AG04450 (cell line): ENCODE measurements at regions of chr5 and their contacts with region 1.

Region 1: DNA sequence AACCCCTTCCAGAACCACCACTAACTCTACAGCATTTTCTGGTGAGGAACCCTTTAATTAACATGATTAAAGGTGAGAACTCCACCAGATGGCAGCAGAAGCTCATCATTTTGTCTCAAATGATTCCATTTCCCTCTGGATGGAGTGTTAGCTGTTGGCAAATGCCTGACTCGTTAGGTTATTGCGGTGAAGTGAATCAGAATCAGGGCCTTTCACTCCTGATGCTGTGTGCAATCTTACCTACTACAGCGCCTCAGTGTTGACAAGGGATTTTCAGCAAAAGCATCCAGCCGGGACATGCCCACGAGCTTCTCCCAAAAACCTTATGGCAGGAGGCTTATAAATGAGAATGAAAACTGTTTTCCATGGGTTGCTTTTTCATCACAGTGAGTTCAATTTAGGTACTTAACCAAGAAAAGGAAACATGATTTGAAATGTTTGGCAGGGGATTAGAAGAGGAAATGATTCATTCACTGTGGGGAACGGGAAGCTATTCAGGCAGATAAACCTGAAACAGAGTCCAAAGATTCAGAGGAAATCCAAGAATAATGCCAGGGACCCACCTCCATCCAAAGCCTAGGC is 48.0 kb upstream of the CAST start:
- DNase-seq: peak; percentile 86
- H3K4me3 ChIP-seq: peak overlapping the region; percentile 45
- H3K27ac ChIP-seq: peak overlapping the region; percentile 81
- H3K27me3 ChIP-seq: no peaks in the 10 kb centered on the region
- CTCF ChIP-seq: peak; percentile 52

Region 2: DNA sequence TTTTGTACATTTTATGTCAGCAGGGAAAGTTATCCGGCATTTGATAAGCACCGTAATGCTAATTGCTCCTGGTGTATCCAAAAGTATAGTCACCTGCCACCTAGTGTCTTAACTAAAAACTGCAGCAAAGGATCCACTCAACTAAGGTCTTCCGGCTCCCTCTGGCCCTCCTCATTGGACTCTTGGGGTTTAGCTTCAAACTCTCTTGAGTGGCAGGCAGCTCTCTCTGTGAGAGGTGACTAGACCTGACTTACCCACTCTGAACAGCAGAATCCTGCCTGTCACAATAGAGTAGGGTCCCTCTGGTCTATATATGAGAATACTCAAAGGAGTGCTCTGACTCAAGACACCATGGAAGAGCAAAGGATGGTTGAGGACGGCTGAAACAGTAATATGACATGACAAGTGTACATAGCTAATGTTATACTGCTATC is 12.4 kb before region 1 on chr5:
- CTCF ChIA-PET with region 1: interaction called, 42 read pairs
- POLR2A ChIA-PET with region 1: no interaction called
- DNase-seq: peak; percentile 44
- H3K4me3 ChIP-seq: no peak overlapping the region
- H3K27ac ChIP-seq: no peak overlapping the region
- H3K27me3 ChIP-seq: no peaks in the 10 kb centered on the region
- CTCF ChIP-seq: peak; percentile 85

Region 3: DNA sequence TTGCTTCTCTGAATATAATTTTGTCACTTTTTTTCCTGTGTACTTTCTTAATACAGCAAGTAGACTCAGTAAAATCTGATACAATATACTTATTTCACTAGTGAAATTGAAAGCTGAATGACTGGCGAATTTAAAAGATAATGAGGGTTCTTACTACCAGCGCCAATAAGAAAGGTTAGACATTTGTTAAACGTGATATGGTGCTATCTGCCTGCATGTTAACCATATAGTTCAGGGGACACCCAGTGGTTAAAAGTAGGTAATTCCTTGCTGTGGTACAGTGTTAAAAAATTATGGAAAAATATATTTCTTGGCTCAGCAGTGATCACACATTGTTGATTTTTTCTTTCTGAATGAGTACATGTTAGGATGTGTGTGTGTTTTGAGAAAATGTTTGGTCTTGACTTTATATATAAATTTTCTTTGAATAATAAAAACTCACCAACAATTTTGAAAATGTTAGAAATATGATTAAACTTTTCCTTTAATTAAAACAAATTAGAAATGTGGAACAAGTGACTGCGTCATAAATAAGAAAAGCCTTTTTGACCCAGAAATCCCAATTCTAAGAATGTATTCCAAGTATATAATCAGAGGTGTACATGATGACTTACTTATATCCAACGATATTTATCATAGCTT is 73.7 kb after region 1 on chr5:
- CTCF ChIA-PET with region 1: interaction called, 69 read pairs
- POLR2A ChIA-PET with region 1: no interaction called
- DNase-seq: no peak
- H3K4me3 ChIP-seq: no peak overlapping the region
- H3K27ac ChIP-seq: no peak overlapping the region
- H3K27me3 ChIP-seq: no peaks in the 10 kb centered on the region
- CTCF ChIP-seq: peak; percentile 77

Region 4: DNA sequence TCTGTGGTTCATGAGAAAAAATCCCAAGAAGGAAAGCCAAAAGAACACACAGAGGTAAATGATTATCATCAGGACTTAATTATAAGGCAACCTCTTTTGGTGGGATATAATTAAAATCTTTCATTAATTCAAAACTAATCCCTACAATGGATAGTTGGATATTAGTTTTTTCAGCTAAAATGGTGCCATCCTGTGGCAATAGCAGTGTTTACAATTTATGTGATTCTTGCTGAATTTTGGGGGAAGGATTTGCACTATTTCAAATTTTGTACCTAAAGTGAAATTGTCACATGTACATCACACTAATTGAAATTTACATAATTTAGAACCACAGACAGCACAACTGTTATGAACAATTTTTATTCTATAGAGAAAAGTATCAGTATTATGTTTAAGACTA is 115.0 kb after region 1 on chr5:
- CTCF ChIA-PET with region 1: interaction called, 25 read pairs
- POLR2A ChIA-PET with region 1: no interaction called
- DNase-seq: no peak
- H3K4me3 ChIP-seq: no peak overlapping the region
- H3K27ac ChIP-seq: no peak overlapping the region
- H3K27me3 ChIP-seq: no peaks in the 10 kb centered on the region
- CTCF ChIP-seq: peak; percentile 32

Region 5: GRCh38 chr5:96752341-96753016 is 138.3 kb after region 1 on chr5:
- CTCF ChIA-PET with region 1: interaction called, 21 read pairs
- POLR2A ChIA-PET with region 1: no interaction called
- DNase-seq: peak; percentile 60
- H3K4me3 ChIP-seq: no peak overlapping the region
- H3K27ac ChIP-seq: no peak overlapping the region
- H3K27me3 ChIP-seq: no peaks in the 10 kb centered on the region
- CTCF ChIP-seq: peak; percentile 67

Region 6: GRCh38 chr5:97162045-97162444 is 547.8 kb after region 1 on chr5:
- CTCF ChIA-PET with region 1: interaction called, 13 read pairs
- POLR2A ChIA-PET with region 1: no interaction called
- DNase-seq: peak; percentile 69
- H3K4me3 ChIP-seq: no peak overlapping the region
- H3K27ac ChIP-seq: no peak overlapping the region
- H3K27me3 ChIP-seq: no peaks in the 10 kb centered on the region
- CTCF ChIP-seq: peak; percentile 93